ENCODE measurements at regions of chr16 and their contacts with region 1.

Region 1: DNA sequence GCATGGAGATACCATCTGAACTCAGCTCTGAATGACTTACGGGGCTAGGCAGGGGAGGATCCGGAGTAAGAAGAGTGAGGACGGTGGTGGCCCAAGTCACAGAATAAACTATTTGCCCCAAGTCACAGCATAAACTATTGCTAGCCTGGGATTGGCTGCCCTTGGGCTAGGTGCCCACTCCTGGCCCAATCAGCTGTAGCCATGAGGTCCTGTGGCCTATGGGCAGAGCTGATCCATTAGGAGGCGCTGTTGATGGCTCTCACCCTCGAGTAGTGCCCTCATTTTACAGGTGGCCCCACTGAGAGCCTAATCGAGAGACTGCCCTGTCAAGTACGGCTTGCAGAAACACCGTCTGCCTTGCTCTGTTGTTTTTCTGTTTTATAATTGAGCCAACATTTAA is 62.3 kb upstream of the ZNF423 start:
- DNase-seq: no peak
- ATAC-seq: no peak

Region 2: DNA sequence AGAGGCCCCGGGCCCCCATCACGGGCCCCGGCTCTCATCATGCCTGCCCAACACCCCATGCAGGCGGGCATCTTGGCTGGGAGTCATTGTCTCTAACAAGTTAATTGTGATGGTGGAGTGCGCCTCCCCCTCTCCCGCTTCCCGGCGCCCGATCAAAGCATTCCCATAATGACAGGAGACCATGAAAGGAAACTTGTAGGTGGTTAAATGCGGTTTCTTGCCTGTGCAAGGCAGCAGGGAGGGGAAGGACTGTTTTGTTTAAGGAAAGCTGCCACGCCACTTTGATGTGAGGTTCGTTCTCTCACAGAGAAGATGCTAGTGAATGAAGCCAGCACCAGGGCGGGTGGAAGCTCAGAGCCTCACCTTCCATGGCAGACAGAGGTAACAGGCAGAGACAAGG is 499.3 kb before region 1 on chr16:
- intact Hi-C with region 1: loop called (anchors 10 kb)
- DNase-seq: no peak
- ATAC-seq: no peak

Region 3: GRCh38 chr16:50530277-50531236 is 612.3 kb after region 1 on chr16:
- intact Hi-C with region 1: no loop called
- DNase-seq: peak; percentile 48
- ATAC-seq: no peak

Region 4: GRCh38 chr16:51262428-51262827 is 1344.2 kb after region 1 on chr16:
- intact Hi-C with region 1: no loop called
- DNase-seq: no peak
- ATAC-seq: no peak